Activated T-helper 1 cell treated with anti-CD3 and anti-CD28 coated beads, Interleukin-12 subunit alpha, Interleukin-12 subunit beta, Interleukin-2, Interleukin-4 antibody, amounts not matched to agents 30 ng/mL and 10 ng/mL and 1 ng/mL, durations not matched to agents 14 hours and 24 hours and 36 hours (primary cell): ENCODE measurements at regions of chr22 and their contacts with region 1.

Region 1: GRCh38 chr22:24994070-24994763 is 41.7 kb downstream of the KIAA1671 start:
- DNase-seq: peak; percentile 71
- H3K4me3 Mint-ChIP-seq: peak overlapping the region; percentile 19
- H3K27ac Mint-ChIP-seq: peak overlapping the region; percentile 81
- H3K4me1 Mint-ChIP-seq: peaks cover 59% of the 10 kb centered on the region
- H3K27me3 Mint-ChIP-seq: peaks cover 7% of the 10 kb centered on the region

Region 2: GRCh38 chr22:24951942-24952836 is 42.0 kb before region 1 on chr22 and contains the start of gene KIAA1671:
- intact Hi-C with region 1: loop called (anchors 1 kb)
- DNase-seq: peak; percentile 88
- H3K4me3 Mint-ChIP-seq: peak within 1 kb of the TSS; percentile 83
- H3K27ac Mint-ChIP-seq: peak within 1 kb of the TSS; percentile 15
- H3K4me1 Mint-ChIP-seq: peaks cover 31% of the 10 kb centered on the region
- H3K27me3 Mint-ChIP-seq: peaks cover 49% of the 10 kb centered on the region
- total RNA-seq, gene KIAA1671: 16.5 and 17.6 TPM in 2 replicates

Region 3: GRCh38 chr22:25027959-25028840 is 34.0 kb after region 1 on chr22:
- intact Hi-C with region 1: loop called (anchors 1 kb)
- DNase-seq: no peak
- H3K4me3 Mint-ChIP-seq: no peak overlapping the region
- H3K27ac Mint-ChIP-seq: no peak overlapping the region
- H3K4me1 Mint-ChIP-seq: peaks cover 28% of the 10 kb centered on the region
- H3K27me3 Mint-ChIP-seq: peaks cover 6% of the 10 kb centered on the region

Region 4: DNA sequence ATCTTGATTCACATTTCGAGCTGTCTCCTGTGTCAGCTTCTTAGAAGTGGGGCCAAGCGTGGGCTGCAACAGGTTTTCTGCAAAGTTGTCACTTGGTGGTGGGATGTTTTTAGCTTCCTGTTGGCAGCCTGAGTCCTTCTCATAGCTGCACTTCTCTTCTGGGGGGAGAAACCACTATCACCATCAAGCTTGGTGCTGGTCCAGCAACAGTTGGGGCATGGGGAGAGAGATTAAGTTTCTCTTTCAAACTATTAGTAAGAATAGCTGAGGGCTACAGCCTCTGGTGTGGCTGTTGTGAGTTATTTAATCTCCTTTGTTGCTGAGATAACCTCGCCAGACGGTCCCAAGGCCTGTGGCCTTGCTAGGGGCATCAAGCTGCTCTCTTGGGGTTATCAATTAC is 82.1 kb after region 1 on chr22:
- intact Hi-C with region 1: loop called (anchors 1 kb)
- DNase-seq: peak; percentile 29
- H3K4me3 Mint-ChIP-seq: peak overlapping the region; percentile 61
- H3K27ac Mint-ChIP-seq: peak overlapping the region; percentile 88
- H3K4me1 Mint-ChIP-seq: peaks cover 90% of the 10 kb centered on the region
- H3K27me3 Mint-ChIP-seq: no peaks in the 10 kb centered on the region

Region 5: DNA sequence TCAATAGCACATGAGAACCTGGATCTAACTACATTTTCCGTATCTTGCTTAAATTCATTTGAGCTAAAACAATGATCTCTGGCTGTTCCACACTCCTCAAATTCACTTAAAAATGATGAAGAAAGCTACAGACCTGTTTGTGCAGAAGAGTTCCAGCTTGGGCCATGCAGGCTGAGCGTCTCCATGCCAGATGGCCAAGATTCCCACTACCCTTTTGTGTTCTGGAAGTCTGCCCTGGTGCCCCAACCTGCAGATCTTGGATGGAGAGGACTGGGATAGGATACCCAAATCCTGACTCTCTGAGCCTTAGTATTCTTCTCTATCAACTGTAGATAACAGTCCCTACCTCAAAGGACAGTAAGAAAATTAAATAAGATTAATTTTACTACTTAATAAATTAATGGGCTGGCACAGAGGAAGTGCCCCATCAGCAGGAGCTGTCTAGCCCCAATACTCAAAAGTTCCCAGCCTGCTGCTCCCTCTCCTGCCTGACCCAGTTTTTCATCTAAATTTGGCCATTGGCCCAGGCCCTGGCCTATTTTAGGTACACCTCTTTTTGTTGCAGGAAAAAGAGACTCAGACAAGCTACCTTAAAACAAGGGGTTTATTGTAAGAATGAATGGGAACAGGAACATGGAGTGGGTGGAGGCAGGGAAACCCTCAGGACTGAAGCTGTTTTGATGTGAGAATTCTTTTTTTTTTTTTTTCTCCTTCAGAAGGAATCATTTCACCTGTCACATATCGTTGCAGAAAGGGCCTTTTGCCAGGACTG is 488.8 kb after region 1 on chr22:
- intact Hi-C with region 1: loop called (anchors 5 kb)
- DNase-seq: no peak
- H3K4me3 Mint-ChIP-seq: no peak overlapping the region
- H3K27ac Mint-ChIP-seq: peak overlapping the region; percentile 80
- H3K4me1 Mint-ChIP-seq: peaks cover 48% of the 10 kb centered on the region
- H3K27me3 Mint-ChIP-seq: no peaks in the 10 kb centered on the region